A673 (cell line): ENCODE measurements at regions of chr16 and their contacts with region 1.

Region 1: GRCh38 chr16:22804893-22805292 is 9.1 kb upstream of the HS3ST2 start:
- DNase-seq: no peak
- H3K4me3 ChIP-seq: no peak overlapping the region
- H3K27ac ChIP-seq: no peak overlapping the region
- H3K4me1 ChIP-seq: no peaks in the 10 kb centered on the region
- H3K27me3 ChIP-seq: peaks cover 66% of the 10 kb centered on the region
- CTCF ChIP-seq: no peak

Region 2: DNA sequence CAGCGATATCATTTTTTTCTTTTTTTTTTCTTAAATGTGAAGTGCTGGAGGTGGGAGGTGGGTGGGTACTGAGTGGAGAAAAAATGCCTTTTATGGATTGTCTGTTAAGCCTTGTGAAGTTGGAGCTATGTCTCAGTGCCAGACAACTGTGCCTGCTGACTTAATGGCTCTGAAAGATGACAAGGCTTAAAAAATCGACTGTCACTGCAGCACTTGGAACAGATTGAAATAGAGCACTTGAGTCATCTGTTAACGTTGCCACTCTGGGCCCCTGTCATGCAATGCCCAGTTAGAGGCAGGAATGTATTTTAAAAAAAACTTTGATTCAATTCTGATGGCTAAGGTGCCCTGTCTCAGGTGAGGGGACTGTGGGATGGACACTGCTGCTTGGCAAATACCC is 99.1 kb before region 1 on chr16:
- CTCF ChIA-PET with region 1: no interaction called
- POLR2A ChIA-PET with region 1: no interaction called
- intact Hi-C with region 1: loop called (anchors 10 kb)
- DNase-seq: no peak
- H3K4me3 ChIP-seq: no peak overlapping the region
- H3K27ac ChIP-seq: no peak overlapping the region
- H3K4me1 ChIP-seq: no peaks in the 10 kb centered on the region
- H3K27me3 ChIP-seq: peaks cover 4% of the 10 kb centered on the region
- CTCF ChIP-seq: no peak

Region 3: DNA sequence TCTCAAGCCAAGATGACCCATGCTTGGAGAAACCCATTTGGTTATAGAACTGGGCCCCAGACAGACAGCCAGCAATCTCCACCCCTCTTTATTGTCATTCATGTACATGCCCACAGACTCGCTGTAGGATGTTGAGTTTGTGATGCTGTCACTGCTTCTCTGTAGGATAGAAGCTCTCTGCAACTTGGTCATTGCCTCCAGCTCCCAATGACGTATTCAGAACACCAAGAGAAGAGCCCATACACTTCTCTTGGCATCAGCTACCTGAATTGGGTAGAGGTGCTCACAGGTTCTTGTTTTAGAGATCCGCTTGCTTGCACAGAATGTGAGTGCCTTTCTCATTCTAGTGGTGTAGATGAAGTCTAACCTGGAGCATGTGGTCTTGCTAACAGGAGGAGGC is 25.1 kb after region 1 on chr16:
- CTCF ChIA-PET with region 1: no interaction called
- POLR2A ChIA-PET with region 1: no interaction called
- intact Hi-C with region 1: no loop called
- DNase-seq: no peak
- H3K4me3 ChIP-seq: no peak overlapping the region
- H3K27ac ChIP-seq: no peak overlapping the region
- H3K4me1 ChIP-seq: no peaks in the 10 kb centered on the region
- H3K27me3 ChIP-seq: peaks cover 21% of the 10 kb centered on the region
- CTCF ChIP-seq: no peak